ENCODE measurements at regions of chr12 and their contacts with region 1.

Region 1: DNA sequence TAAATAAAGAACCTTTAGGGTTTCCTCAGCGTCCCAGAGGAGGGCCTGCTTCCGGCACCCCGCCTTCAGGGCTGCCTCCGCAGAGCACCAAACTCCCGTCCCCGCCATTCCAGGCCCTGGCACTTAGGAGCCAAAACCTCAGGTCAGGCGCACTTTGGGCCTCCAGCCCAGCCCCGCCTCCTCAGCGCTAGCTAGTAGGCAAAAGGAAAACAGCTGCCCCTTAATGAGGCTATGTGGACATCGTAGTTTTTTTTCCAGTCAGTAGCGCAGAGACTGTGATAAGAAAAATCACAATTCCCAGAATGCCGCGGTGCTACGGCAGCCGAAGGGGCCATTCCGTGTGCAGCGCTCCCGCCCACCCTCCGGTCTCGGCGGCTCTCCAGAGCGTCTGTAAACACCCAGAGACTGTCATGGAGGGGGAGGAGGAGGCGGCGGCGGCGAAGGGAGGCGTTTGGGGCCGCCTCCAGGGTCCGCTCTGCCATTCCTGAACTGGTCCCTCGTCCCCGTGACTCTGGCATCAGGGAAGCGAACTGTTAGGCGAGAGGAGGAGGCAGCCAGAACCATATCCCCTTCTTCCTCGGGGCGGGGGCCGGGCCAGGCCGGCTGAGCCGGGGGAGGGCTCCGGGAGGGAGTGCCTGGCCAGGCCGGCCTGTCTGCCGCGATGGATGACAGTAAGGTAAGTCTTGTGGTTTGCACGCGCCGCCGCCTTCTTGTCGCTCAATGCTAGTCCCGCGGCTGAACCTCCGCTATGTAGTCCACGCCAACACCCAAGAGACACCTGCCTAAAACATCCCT is at the start of gene CREBL2:
- DNase-seq: peak; percentile 95
- ATAC-seq: peak; percentile 94
- H3K4me3 ChIP-seq: peak within 1 kb of the TSS; percentile 66 to 96 (median 71)
- H3K27ac ChIP-seq: peak within 1 kb of the TSS; percentile 88
- H3K4me1 ChIP-seq: peaks cover 58% of the 10 kb centered on the region
- H3K27me3 ChIP-seq: no peaks in the 10 kb centered on the region
- CTCF ChIP-seq: peak; percentile 41
- EP300 ChIP-seq: peak; percentile 12 to 53; a peak in 1 of 4 replicates
- POLR2A ChIP-seq: peak; percentile 60 to 82
- RAD21 ChIP-seq: no peak
- total RNA-seq, gene CREBL2: 6.9 and 10.1 TPM in 2 replicates

Region 2: DNA sequence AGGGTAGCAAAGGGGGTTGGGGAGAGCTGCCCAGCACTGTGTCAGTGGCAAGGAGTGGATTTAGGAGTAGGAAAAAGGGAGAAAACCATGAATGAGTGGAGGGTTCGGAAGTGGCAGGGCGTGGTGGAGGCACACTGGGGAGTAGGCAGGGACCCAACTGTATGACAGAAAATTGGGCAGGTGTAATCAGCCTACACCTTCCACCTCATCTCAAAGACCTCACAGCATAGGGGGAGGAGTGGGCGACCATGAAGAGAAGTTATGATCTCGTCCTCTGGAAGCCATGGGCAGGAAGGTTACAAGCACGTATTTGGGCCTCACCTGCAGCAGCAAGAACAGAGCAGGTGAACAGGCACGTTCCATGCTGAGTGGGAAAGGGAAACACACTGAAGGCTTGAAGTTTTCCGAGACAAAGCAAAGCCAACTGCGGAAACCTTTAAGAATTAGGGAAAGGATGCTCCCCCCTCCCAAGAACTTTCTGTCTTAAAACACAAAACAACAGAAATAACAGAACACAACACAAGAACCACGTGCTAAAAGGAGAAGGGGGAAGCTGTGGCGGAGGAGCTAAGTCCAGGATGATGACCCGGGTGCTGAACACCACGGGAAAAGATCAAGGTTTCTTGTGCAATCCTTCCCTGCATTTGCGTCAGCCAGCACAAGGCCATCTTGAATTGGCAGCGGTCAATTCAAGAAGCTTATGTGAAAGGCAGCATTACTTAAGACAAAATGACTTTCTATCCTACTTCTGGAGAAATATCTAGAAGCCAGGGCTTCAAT is 11.3 kb before region 1 on chr12:
- CTCF ChIA-PET with region 1: no interaction called
- POLR2A ChIA-PET with region 1: interaction called, 12 read pairs
- in situ Hi-C with region 1: no loop called
- intact Hi-C with region 1: no loop called
- DNase-seq: peak; percentile 24
- ATAC-seq: no peak
- H3K4me3 ChIP-seq: no peak overlapping the region
- H3K27ac ChIP-seq: no peak overlapping the region
- H3K4me1 ChIP-seq: peaks cover 28% of the 10 kb centered on the region
- H3K27me3 ChIP-seq: no peaks in the 10 kb centered on the region
- CTCF ChIP-seq: no peak
- EP300 ChIP-seq: no peak
- POLR2A ChIP-seq: no peak
- RAD21 ChIP-seq: no peak

Region 3: GRCh38 chr12:12624498-12624992 is 12.8 kb after region 1 on chr12:
- CTCF ChIA-PET with region 1: no interaction called
- POLR2A ChIA-PET with region 1: interaction called, 13 read pairs
- in situ Hi-C with region 1: no loop called
- intact Hi-C with region 1: loop called (anchors 1 kb)
- DNase-seq: peak; percentile 63
- ATAC-seq: peak; percentile 98
- H3K4me3 ChIP-seq: peak overlapping the region in 1 of 3 experiments; percentile 51; a peak in 2 of 6 replicates
- H3K27ac ChIP-seq: peak overlapping the region; percentile 65
- H3K4me1 ChIP-seq: peaks cover 38% of the 10 kb centered on the region
- H3K27me3 ChIP-seq: no peaks in the 10 kb centered on the region
- CTCF ChIP-seq: 0 out of 2 replicates have a peak, but pooled peaks have one; percentile 10
- EP300 ChIP-seq: no peak
- POLR2A ChIP-seq: 0 out of 4 replicates have a peak, but pooled peaks of 1 of the 2 experiments have one; percentile 19
- RAD21 ChIP-seq: no peak

Region 4: DNA sequence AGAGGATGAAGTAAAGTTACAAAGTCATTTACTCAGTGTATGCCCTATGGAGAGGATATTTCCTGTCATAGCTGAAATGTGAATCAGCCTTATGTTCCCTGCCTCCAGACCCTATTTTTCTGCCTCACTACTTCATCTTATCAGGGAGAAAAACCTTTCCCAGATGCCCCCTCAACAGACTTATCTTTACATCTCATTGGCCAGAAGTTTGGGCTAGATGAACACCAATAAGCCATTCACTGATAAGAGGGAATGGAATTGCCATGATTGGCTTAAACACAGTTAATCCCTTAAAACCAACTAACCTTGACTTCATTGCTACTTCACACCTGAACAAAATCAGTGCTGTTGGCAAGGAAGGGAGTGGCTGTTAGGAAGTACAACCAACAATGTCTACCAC is 40.0 kb after region 1 on chr12:
- CTCF ChIA-PET with region 1: no interaction called
- POLR2A ChIA-PET with region 1: no interaction called
- in situ Hi-C with region 1: no loop called
- intact Hi-C with region 1: no loop called
- DNase-seq: no peak
- ATAC-seq: no peak
- H3K4me3 ChIP-seq: no peak overlapping the region
- H3K27ac ChIP-seq: no peak overlapping the region
- H3K4me1 ChIP-seq: peaks cover 13% of the 10 kb centered on the region
- H3K27me3 ChIP-seq: no peaks in the 10 kb centered on the region
- CTCF ChIP-seq: no peak
- EP300 ChIP-seq: no peak
- POLR2A ChIP-seq: no peak
- RAD21 ChIP-seq: no peak

Region 5: DNA sequence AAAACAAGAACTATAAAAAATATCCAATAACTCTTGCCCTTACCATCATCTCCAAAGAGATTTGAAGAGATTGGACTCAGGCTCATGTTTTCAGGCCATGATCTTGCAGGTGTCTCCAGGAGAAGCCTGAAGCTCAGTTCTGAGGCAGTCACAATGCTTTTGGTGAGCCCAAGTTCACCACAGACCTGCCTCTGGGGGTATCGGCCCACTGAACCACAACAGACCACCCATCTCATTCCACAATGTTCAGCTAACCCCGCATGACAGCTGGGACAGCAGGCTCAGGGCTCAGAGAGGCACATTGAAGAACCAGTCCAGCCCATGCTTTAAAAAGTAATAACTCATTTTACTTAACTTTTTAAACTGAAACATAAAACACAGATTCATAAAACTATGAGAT is 145.4 kb after region 1 on chr12:
- CTCF ChIA-PET with region 1: no interaction called
- POLR2A ChIA-PET with region 1: no interaction called
- in situ Hi-C with region 1: no loop called
- intact Hi-C with region 1: no loop called
- DNase-seq: no peak
- ATAC-seq: no peak
- H3K4me3 ChIP-seq: no peak overlapping the region
- H3K27ac ChIP-seq: no peak overlapping the region
- H3K4me1 ChIP-seq: peaks cover 11% of the 10 kb centered on the region; the same call in 1 of the 2 replicates
- H3K27me3 ChIP-seq: no peaks in the 10 kb centered on the region
- CTCF ChIP-seq: no peak
- EP300 ChIP-seq: no peak
- POLR2A ChIP-seq: no peak
- RAD21 ChIP-seq: no peak